Right ventricle myocardium inferior (tissue), 1 donor: ENCODE measurements at regions of chr7 and their contacts with region 1.

Region 1: DNA sequence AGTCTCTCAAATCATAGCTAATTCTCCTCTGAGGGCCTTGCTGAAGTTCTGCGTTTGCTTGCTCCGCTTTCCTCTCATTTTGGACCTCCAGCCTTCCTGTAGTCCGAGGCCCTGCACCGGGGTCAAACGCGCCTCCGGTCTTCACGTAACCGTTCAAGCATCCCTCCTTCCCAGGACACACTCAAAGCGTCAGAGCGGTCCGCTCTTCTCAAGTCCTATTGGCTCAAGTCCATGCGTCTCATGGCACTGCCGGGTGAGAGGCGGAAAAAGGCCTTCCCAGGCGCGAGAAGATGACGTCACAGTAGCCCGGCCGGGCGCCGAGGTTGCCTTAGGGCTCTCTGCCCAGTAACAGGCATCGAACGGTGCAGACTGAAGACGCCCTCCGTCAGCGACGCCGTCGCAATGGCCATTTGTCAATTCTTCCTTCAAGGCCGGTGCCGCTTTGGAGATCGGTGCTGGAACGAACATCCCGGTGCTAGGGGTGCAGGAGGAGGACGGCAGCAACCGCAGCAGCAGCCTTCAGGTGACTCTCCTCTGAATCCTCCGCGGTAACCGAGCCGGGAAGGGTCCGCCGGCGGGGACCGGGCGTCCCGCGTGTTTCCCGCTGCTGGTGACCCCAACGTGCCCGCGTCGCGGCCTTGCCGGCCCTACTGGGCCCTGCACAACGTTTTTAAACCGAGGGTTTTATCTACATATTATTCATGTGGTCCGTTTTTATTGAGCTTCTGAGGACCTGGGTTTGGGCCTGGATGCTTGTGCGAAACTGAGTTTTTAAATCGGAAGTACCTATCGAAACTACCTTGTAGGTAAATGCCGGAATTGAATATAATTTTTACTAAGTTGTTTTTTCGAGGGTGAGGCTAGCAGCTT is at the start of gene NUP42:
- DNase-seq: peak; percentile 97
- ATAC-seq: peak; percentile 97
- total RNA-seq, gene NUP42: 21.6 TPM

Region 2: GRCh38 chr7:22565315-22565811 is 616.6 kb before region 1 on chr7:
- intact Hi-C with region 1: no loop called
- DNase-seq: no peak
- ATAC-seq: peak; percentile 20

Region 3: GRCh38 chr7:23105644-23106056 is 76.3 kb before region 1 on chr7 and contains the start of gene KLHL7:
- intact Hi-C with region 1: loop called (anchors 1 kb)
- DNase-seq: peak; percentile 99
- ATAC-seq: peak; percentile 98
- total RNA-seq, gene KLHL7: 162 TPM

Region 4: DNA sequence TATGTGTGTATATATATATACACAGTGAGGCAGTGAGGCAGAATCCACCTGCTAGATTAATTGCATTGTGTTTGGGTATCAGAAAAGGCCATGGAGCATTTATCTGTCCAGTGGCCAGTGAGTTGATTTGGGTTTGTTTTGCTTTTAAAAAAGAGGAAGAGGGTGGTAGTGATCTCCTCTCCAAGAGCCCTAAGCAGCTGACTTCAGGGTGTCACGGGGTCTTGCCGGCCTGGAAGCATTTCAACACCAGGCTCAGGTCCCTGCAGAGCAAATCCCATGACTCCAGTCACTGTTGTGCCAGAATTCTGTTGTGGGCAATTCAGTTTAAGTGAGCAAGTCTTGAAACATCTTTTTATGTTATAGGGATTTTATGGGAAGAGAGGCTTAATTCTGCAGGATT is 34.1 kb after region 1 on chr7:
- intact Hi-C with region 1: no loop called
- DNase-seq: no peak
- ATAC-seq: peak; percentile 66

Region 5: DNA sequence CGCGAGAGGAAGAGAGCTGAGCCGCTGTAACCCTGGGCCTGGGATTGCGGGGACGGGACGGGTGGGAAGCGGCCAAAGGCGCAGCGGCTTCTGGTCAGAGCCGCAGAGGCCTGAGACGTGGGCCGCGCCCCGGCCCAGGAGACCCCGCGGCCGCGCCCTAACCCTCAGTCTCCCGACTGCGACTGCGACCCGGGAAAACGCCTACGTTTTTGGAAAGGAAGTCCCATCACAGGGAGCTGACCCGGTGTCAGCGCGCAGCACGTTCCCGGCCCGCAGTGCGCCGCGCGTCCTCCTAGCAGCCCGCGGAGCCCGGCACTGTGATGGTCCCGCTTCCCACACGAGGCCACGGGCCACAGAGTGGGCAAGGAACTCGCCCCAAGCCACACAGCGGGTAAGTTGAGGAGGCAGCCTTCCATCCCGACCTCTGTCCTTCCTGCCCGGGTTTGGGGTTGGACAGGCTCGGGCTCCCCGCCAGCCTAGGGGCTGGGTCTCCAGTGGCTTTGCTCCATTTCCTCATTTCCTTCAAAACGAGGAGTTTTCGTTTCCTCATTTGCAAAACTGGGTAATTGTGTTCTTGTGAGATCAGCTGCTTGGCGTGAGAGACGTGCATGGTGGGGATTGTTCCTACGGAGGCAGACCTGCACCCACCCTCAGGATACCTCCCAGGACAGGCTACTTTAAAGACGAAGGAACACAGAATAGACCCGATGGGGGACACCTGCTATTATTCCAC is 65.8 kb after region 1 on chr7:
- intact Hi-C with region 1: loop called (anchors 5 kb)
- DNase-seq: peak; percentile 84
- ATAC-seq: peak; percentile 77

Region 6: DNA sequence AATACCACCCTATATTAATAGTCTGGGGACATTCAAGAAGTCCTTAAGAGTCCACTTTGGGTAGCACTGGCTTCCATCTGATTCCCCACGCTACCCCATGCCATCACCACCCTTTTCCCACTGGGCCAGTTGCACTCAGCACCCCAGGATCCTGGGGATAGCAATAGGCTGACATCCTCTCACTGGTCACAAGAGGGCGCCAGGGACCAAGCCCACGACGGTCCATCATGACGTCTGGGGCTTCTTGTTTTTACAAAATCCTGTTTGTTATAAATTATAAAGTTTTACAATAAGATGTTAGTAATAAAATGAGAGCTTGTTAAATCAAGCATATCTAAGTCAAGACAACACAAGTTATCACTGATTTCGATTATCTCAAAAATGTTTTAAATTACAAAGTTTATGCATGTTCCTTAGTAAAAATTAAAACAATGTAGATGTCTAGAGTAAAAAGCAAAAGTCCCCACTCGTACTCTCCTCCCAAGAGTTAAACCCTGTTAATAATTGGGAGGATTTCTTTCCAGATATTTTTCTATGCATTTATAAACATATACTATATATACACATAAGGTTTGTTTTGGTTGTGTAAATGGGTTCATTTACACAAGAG is 80.0 kb after region 1 on chr7:
- intact Hi-C with region 1: loop called (anchors 5 kb)
- DNase-seq: peak; percentile 83
- ATAC-seq: peak; percentile 83

Region 7: DNA sequence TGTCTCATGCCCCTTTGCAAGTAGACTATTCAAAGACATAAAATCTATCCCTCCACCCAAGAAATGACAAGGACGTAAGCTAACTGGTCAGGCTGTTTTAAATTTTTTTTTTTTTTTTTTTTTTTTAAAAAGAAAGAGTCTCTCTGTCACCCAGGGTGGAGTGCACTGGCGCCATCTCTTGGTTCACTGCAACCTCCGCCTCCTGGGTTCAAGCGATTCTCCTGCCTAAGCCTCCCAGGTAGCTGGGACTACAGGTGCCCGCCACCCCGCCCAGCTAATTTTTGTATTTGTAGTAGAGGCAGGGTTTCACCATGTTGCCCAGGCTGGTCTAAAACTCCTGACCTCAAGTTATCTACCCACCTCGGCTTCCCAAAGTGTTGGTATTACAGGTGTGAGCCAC is 338.7 kb after region 1 on chr7:
- intact Hi-C with region 1: loop called (anchors 10 kb)
- DNase-seq: no peak
- ATAC-seq: no peak